ENCODE measurements at regions of chr10 and their contacts with region 1.

Region 1: GRCh38 chr10:132011024-132011423 is 29.3 kb upstream of the BNIP3 start:
- DNase-seq: no peak
- ATAC-seq: no peak
- H3K4me3 ChIP-seq: no peak overlapping the region
- H3K4me3 Mint-ChIP-seq: no peak overlapping the region
- H3K27ac ChIP-seq: no peak overlapping the region
- H3K27ac Mint-ChIP-seq: no peak overlapping the region
- H3K4me1 ChIP-seq: no peaks in the 10 kb centered on the region
- H3K4me1 Mint-ChIP-seq: no peaks in the 10 kb centered on the region
- H3K27me3 ChIP-seq: peaks cover 0 to 2% (median 0%) of the 10 kb centered on the region in 4 experiments
- H3K27me3 Mint-ChIP-seq: peaks cover 23% of the 10 kb centered on the region
- CTCF ChIP-seq: no peak

Region 2: DNA sequence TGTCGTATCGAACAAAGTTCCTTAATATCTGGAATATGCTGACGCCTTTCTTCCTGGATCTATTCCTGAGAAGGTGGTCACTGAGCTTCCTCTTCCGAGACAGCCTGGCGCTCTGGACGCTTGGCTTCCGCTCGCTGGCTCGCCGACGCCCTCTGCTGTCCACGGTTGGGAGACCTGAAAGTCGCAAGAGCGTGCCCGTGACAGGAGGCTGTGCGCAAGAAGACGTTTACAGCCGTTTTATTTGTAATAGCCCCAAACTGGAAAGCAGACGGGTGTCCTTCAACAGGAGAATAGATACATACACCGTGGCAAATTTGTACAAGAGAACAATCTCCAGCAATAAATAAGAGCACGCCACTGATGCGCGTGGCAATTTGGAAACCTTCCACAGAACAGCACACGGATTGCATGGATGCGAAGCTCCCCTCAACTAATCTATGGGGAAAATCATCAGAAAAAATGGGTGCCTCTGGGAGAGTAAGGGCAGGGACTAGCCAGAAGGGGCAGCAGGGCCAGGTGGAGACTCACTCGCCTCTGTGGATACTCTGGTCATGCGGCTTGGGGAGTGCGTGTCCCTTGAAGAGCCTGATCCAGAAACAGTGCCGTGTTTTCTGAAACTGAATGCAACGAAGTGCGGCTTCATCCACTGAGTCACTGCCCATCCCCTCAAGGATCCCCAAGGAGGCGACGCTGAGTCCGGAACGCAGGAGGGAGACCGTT is 12.2 kb after region 1 on chr10:
- CTCF ChIA-PET with region 1: interaction called, 13 read pairs
- POLR2A ChIA-PET with region 1: no interaction called
- intact Hi-C with region 1: no loop called
- DNase-seq: peak; percentile 72
- ATAC-seq: peak; percentile 69
- H3K4me3 ChIP-seq: no peak overlapping the region
- H3K4me3 Mint-ChIP-seq: peak overlapping the region; percentile 14
- H3K27ac ChIP-seq: no peak overlapping the region
- H3K27ac Mint-ChIP-seq: no peak overlapping the region
- H3K4me1 ChIP-seq: peaks cover 0 to 7% of the 10 kb centered on the region in 2 donors
- H3K4me1 Mint-ChIP-seq: peaks cover 5% of the 10 kb centered on the region
- H3K27me3 ChIP-seq: peaks cover 0 to 7% (median 3%) of the 10 kb centered on the region in 4 experiments
- H3K27me3 Mint-ChIP-seq: peaks cover 34% of the 10 kb centered on the region
- CTCF ChIP-seq: peak; percentile 82

Region 3: GRCh38 chr10:132142411-132143161 is 131.6 kb after region 1 on chr10:
- CTCF ChIA-PET with region 1: no interaction called
- POLR2A ChIA-PET with region 1: no interaction called
- intact Hi-C with region 1: no loop called
- DNase-seq: peak; percentile 47
- ATAC-seq: peak; percentile 73
- H3K4me3 ChIP-seq: no peak overlapping the region
- H3K4me3 Mint-ChIP-seq: no peak overlapping the region
- H3K27ac ChIP-seq: no peak overlapping the region
- H3K27ac Mint-ChIP-seq: no peak overlapping the region
- H3K4me1 ChIP-seq: peaks cover 0 to 2% of the 10 kb centered on the region in 2 donors
- H3K4me1 Mint-ChIP-seq: no peaks in the 10 kb centered on the region
- H3K27me3 ChIP-seq: peaks cover 0 to 10% (median 0%) of the 10 kb centered on the region in 4 experiments
- H3K27me3 Mint-ChIP-seq: peaks cover 3% of the 10 kb centered on the region
- CTCF ChIP-seq: peak; percentile 87

Measured in B cell (primary cell).